Adrenal gland (tissue), 19 donors: ENCODE measurements at regions of chr17 and their contacts with region 1.

Region 1: GRCh38 chr17:76623271-76624146 is 20.0 kb downstream of the ST6GALNAC1 start:
- DNase-seq: peak; percentile 72 to 89 (median 82)
- H3K4me3 ChIP-seq: no peak overlapping the region
- H3K27ac ChIP-seq: peak overlapping the region in 2 of 5 donors; percentile 29 to 50
- H3K4me1 ChIP-seq: peaks cover 6 to 7% of the 10 kb centered on the region in 2 donors
- H3K27me3 ChIP-seq: no peaks in the 10 kb centered on the region
- CTCF ChIP-seq: peak; percentile 85 to 97 (median 91)
- POLR2A ChIP-seq: no peak

Region 2: GRCh38 chr17:76562734-76563148 is 60.8 kb before region 1 on chr17:
- intact Hi-C with region 1: loop called in 1 of 2 experiments (anchors 10 kb)
- DNase-seq: peak in 6 of 7 donors; percentile 73 to 80 (median 76)
- H3K4me3 ChIP-seq: no peak overlapping the region
- H3K27ac ChIP-seq: peak overlapping the region in 4 of 5 donors; percentile 34 to 80 (median 50)
- H3K4me1 ChIP-seq: peaks cover 37 to 51% of the 10 kb centered on the region in 2 donors
- H3K27me3 ChIP-seq: no peaks in the 10 kb centered on the region
- CTCF ChIP-seq: no peak
- POLR2A ChIP-seq: peak in 1 of 2 donors; percentile 30